ENCODE measurements at regions of chr11 and their contacts with region 1.

Region 1: DNA sequence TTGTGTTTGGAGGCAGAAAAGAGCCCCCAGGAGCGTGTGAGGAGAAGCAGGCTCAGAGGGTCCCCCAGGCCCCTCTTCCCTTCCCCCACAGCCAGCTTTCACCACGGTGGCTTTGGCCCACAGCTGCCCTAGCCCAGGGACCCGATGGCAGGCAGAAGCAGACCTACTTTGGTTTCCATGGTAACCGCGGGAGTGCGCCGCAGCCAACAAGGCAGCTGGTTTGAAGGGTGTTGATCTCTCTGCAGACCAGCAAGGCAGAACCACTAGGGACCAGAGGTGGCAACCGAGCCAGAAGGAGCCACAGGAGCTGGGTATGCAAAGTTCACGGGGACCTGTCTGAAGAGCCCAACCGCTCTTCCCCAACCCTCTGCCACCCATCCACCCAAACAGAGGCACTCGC is 69.4 kb downstream of the BUD13 start:
- DNase-seq: no peak
- H3K4me3 ChIP-seq: no peak overlapping the region
- H3K27me3 ChIP-seq: peaks cover 12% of the 10 kb centered on the region
- CTCF ChIP-seq: no peak

Region 2: GRCh38 chr11:116691771-116692177 is 11.6 kb before region 1 on chr11:
- CTCF ChIA-PET with region 1: interaction called, 12 read pairs
- POLR2A ChIA-PET with region 1: no interaction called
- DNase-seq: no peak
- H3K4me3 ChIP-seq: no peak overlapping the region
- H3K27me3 ChIP-seq: peaks cover 2% of the 10 kb centered on the region
- CTCF ChIP-seq: peak; percentile 90